ENCODE measurements at regions of chr1 and their contacts with region 1.

Region 1: DNA sequence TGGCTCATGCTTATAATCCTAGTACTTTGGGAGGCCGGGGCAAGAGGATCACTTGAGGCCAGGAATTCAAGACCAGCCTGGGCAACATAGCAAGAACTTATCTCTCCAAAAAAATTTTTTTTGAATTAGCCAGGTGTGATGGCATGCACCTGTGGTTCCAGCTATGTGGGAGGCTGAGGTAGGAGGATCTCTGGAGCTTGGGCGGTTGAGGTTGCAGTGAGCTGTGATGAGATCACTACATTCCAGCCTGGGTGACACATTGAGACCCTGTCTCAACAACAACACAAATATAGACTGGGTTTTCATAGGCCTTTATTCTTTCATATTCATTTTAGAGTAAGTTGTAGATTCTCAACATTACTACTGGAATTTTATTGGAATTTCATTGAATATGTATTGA is 12.8 kb downstream of the MED18 start:
- DNase-seq: peak; percentile 45
- ATAC-seq: no peak
- H3K4me3 ChIP-seq: no peak overlapping the region
- H3K27ac ChIP-seq: no peak overlapping the region
- H3K4me1 ChIP-seq: no peaks in the 10 kb centered on the region
- H3K27me3 ChIP-seq: no peaks in the 10 kb centered on the region
- CTCF ChIP-seq: no peak
- POLR2A ChIP-seq: no peak
- RAD21 ChIP-seq: no peak

Region 2: GRCh38 chr1:27010989-27011764 is 1330.4 kb before region 1 on chr1:
- CTCF ChIA-PET with region 1: no interaction called
- POLR2A ChIA-PET with region 1: no interaction called
- dilution Hi-C with region 1: no loop called
- in situ Hi-C with region 1: no loop called
- intact Hi-C with region 1: no loop called
- DNase-seq: peak; percentile 88
- ATAC-seq: peak; percentile 63
- H3K4me3 ChIP-seq: no peak overlapping the region
- H3K27ac ChIP-seq: peak overlapping the region; percentile 63
- H3K4me1 ChIP-seq: peaks cover 28% of the 10 kb centered on the region
- H3K27me3 ChIP-seq: no peaks in the 10 kb centered on the region
- CTCF ChIP-seq: no peak
- POLR2A ChIP-seq: no peak
- RAD21 ChIP-seq: no peak

Region 3: GRCh38 chr1:28266920-28267322 is 74.7 kb before region 1 on chr1:
- CTCF ChIA-PET with region 1: interaction called, 5 read pairs
- POLR2A ChIA-PET with region 1: interaction called, 14 read pairs
- dilution Hi-C with region 1: no loop called
- in situ Hi-C with region 1: no loop called
- intact Hi-C with region 1: no loop called
- DNase-seq: no peak
- ATAC-seq: no peak
- H3K4me3 ChIP-seq: no peak overlapping the region
- H3K27ac ChIP-seq: no peak overlapping the region
- H3K4me1 ChIP-seq: peaks cover 16% of the 10 kb centered on the region
- H3K27me3 ChIP-seq: no peaks in the 10 kb centered on the region
- CTCF ChIP-seq: no peak
- POLR2A ChIP-seq: no peak
- RAD21 ChIP-seq: no peak

Region 4: DNA sequence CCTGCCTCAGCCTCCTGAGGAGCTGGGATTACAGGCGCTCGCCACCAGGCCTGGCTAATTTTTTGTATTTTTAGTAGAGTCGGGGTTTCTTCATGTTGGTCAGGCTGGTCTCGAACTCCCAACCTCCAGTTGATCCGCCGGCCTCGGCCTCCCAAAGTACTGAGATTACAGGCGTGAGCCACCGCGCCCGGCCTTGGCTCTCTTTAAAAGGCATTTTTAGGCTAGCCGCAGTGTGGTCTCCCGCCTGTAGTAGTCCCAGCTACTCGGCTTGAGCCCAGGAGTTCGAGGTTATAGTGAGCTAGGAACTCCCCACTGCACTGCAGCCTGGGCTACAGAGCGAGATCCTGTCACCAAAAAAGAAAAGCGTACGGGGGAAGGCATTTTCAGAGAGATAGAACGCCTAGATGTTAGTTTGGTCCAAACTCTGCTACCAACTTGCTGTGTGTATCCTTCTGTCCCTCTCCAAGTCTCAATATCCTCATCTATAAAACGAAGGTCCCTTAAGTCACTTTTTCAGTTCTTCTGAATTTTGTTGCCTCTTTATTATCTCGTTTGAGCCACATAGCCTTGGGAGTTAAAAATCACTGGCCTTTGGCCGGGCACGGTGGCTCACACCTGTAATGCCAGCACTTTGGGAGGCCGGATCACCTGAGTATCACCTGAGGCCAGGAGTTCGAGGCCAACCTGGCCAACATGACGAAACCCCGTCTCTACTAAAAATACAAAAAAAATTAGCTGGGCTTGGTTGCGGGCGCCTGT is 12.0 kb before region 1 on chr1:
- CTCF ChIA-PET with region 1: interaction called, 3 read pairs
- POLR2A ChIA-PET with region 1: interaction called, 24 read pairs
- dilution Hi-C with region 1: no loop called
- in situ Hi-C with region 1: no loop called
- intact Hi-C with region 1: no loop called
- DNase-seq: peak; percentile 21
- ATAC-seq: peak; percentile 16
- H3K4me3 ChIP-seq: peak overlapping the region; percentile 60
- H3K27ac ChIP-seq: peak overlapping the region; percentile 72
- H3K4me1 ChIP-seq: no peaks in the 10 kb centered on the region
- H3K27me3 ChIP-seq: no peaks in the 10 kb centered on the region
- CTCF ChIP-seq: 0 out of 2 replicates have a peak, but pooled peaks have one; percentile 4
- POLR2A ChIP-seq: no peak
- RAD21 ChIP-seq: no peak